ENCODE measurements at regions of chr20 and their contacts with region 1.

Region 1: DNA sequence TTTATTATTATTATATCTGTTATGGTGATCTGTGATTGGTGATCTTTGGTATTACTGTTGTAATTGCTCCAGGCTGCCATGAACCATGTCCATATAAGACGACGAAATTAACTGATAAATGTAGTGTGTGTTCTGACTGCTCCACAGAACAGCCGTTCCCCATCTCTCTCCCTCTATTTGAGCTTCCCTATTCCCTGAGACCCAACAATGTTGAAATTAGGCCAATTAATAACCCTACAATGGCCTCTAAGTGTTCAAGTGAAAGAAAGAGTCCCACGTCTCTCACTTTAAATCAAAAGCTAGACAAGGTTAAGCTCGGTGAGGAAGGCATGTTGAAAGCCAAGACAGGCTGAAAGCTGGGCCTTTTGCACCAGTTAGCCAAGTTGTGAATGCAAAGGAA is 51.6 kb downstream of the ZFP64 start:
- DNase-seq: no peak
- H3K4me3 ChIP-seq: no peak overlapping the region
- CTCF ChIP-seq: no peak

Region 2: GRCh38 chr20:51469578-51470498 is 670.1 kb before region 1 on chr20:
- in situ Hi-C with region 1: no loop called
- DNase-seq: no peak
- H3K4me3 ChIP-seq: no peak overlapping the region
- CTCF ChIP-seq: no peak

Region 3: DNA sequence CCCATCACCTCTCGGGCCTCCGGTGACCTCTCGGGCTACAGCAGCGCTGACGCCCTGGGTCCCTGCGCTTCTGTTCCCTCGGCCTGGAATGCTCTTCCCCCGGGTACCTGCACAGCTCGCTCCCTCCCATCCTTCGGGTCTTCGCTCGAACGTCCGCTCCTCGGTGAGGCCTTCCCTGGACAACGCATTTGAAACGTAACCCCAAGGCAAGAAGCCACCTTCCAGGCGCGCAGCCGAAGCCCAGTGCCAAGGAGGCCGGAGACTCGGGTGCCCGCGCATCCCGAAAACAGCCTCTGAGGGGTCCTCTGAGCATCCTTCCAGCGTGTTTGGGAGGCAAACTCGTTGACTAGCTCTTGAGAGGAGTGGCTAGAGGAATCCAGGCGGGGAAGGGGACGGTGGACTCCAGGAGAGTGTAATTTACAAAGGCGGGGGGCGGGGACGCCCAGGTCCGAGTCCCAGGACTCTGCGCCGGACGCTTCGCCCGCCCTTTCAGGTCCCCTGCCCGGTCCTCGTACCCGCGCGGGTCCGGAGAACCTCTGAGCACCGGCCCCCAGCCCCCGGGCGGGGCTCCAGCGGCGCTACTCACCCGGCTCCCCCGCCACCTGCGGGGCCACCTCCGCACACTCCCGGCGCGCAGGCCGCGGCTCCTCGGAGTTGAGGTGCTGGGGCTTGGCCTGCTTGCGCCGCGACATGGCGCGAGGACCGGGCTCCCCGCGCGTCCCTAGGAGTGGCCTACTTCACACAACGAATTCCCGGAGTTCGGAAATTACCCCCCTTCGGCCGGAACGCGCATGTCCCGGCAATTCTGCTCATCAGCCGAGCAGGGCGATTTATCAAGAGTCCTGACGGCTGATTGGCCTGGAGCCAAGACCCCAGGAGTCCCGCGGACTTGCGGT is 35.2 kb before region 1 on chr20:
- in situ Hi-C with region 1: loop called (anchors 5 kb)
- DNase-seq: no peak
- H3K4me3 ChIP-seq: peak overlapping the region; percentile 55
- CTCF ChIP-seq: no peak